Psoas muscle (tissue), 8 donors: ENCODE measurements at regions of chr6 and their contacts with region 1.

Region 1: GRCh38 chr6:17469006-17469832 is 75.8 kb downstream of the CAP2 start:
- DNase-seq: no peak
- ATAC-seq: peak in 2 of 4 donors; percentile 31 to 34
- H3K4me3 ChIP-seq: no peak overlapping the region
- H3K27ac ChIP-seq: peak overlapping the region; percentile 88
- H3K4me1 ChIP-seq: peaks cover 68% of the 10 kb centered on the region
- H3K27me3 ChIP-seq: no peaks in the 10 kb centered on the region
- CTCF ChIP-seq: peak; percentile 48

Region 2: DNA sequence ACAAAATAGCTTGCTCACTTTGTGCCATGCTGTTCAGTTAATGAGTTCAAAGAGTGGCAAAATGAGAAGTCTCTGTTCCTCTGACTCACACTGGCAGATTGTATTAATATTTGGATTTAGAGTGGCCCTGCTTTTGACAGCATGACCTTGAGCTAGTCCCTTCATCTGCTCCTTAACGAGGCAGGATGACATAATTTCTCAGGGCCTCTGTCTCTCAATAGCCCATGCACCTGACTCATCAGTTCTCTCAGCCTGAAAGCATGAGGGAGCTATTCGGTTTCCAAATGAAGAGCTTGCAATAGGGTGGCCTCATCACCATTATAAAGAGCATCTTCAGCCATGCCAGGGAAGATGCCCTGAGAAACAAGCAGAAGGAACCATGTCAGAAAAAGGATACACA is 37.6 kb before region 1 on chr6:
- intact Hi-C with region 1: loop called in 1 of 2 experiments (anchors 5 kb)
- DNase-seq: no peak
- ATAC-seq: peak; percentile 80 to 83 (median 81)
- H3K4me3 ChIP-seq: no peak overlapping the region
- H3K27ac ChIP-seq: peak overlapping the region; percentile 87
- H3K4me1 ChIP-seq: peaks cover 38% of the 10 kb centered on the region
- H3K27me3 ChIP-seq: no peaks in the 10 kb centered on the region
- CTCF ChIP-seq: no peak